CD8-positive, alpha-beta T cell (primary cell): ENCODE measurements at regions of chr11 and their contacts with region 1.

Region 1: GRCh38 chr11:16785520-16786128 is 47.2 kb downstream of the C11orf58 start:
- DNase-seq: peak; percentile 16 to 65 (median 47)
- ATAC-seq: peak; percentile 80
- H3K4me3 ChIP-seq: no peak overlapping the region
- H3K4me3 Mint-ChIP-seq: no peak overlapping the region
- H3K27ac ChIP-seq: no peak overlapping the region
- H3K27ac Mint-ChIP-seq: no peak overlapping the region
- H3K4me1 ChIP-seq: no peaks in the 10 kb centered on the region
- H3K4me1 Mint-ChIP-seq: no peaks in the 10 kb centered on the region
- H3K27me3 ChIP-seq: no peaks in the 10 kb centered on the region
- H3K27me3 Mint-ChIP-seq: no peaks in the 10 kb centered on the region
- CTCF ChIP-seq: peak; percentile 69

Region 2: GRCh38 chr11:16773981-16774935 is 11.4 kb before region 1 on chr11:
- CTCF ChIA-PET with region 1: interaction called, 18 read pairs
- POLR2A ChIA-PET with region 1: no interaction called
- intact Hi-C with region 1: no loop called
- DNase-seq: no peak
- ATAC-seq: no peak
- H3K4me3 ChIP-seq: no peak overlapping the region
- H3K4me3 Mint-ChIP-seq: no peak overlapping the region
- H3K27ac ChIP-seq: no peak overlapping the region
- H3K27ac Mint-ChIP-seq: no peak overlapping the region
- H3K4me1 ChIP-seq: no peaks in the 10 kb centered on the region
- H3K4me1 Mint-ChIP-seq: no peaks in the 10 kb centered on the region
- H3K27me3 ChIP-seq: no peaks in the 10 kb centered on the region
- H3K27me3 Mint-ChIP-seq: peaks cover 2% of the 10 kb centered on the region
- CTCF ChIP-seq: no peak

Region 3: GRCh38 chr11:16801288-16801980 is 15.8 kb after region 1 on chr11:
- CTCF ChIA-PET with region 1: interaction called, 13 read pairs
- POLR2A ChIA-PET with region 1: no interaction called
- intact Hi-C with region 1: no loop called
- DNase-seq: no peak
- ATAC-seq: no peak
- H3K4me3 ChIP-seq: no peak overlapping the region
- H3K4me3 Mint-ChIP-seq: no peak overlapping the region
- H3K27ac ChIP-seq: no peak overlapping the region
- H3K27ac Mint-ChIP-seq: no peak overlapping the region
- H3K4me1 ChIP-seq: no peaks in the 10 kb centered on the region
- H3K4me1 Mint-ChIP-seq: no peaks in the 10 kb centered on the region
- H3K27me3 ChIP-seq: no peaks in the 10 kb centered on the region
- H3K27me3 Mint-ChIP-seq: no peaks in the 10 kb centered on the region
- CTCF ChIP-seq: no peak

Region 4: DNA sequence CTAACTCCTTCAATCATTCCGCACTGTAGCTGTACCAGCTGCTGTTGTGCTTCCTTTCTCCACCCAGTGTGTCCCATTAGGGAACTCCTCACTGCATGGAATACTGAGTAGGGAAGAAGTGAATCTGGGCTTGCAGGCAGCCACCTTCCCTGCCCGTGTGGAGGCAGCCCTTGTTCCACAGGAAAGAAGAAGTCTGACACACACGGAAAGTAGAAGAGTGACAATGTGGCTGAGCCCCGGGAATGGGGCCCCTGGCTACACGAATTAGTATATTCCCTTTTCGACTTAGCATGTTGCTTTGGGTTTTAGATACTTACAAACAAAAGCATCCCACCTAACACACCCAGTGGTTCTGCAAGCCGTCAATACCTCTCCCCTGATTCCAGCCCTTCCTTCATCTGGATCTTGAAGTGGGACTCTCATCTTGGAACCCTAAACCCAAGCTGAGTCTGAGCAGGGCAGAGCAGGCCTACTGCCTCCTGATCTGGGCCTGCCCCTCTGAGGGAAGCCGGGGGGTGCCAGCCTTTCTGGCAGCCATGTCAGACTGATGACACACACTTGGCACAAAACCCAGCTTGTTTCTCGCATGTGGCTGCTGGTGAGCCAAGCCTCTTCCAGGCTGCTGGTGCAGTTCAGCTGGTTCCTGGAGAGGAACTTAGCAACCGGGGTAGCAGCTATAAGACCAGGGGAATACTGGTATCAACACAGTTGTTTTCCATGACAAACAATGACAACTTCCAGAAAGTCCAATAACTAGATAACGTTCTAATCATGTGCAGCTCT is 24.5 kb after region 1 on chr11:
- CTCF ChIA-PET with region 1: interaction called, 25 read pairs
- POLR2A ChIA-PET with region 1: no interaction called
- intact Hi-C with region 1: no loop called
- DNase-seq: no peak
- ATAC-seq: no peak
- H3K4me3 ChIP-seq: no peak overlapping the region
- H3K4me3 Mint-ChIP-seq: no peak overlapping the region
- H3K27ac ChIP-seq: no peak overlapping the region
- H3K27ac Mint-ChIP-seq: no peak overlapping the region
- H3K4me1 ChIP-seq: no peaks in the 10 kb centered on the region
- H3K4me1 Mint-ChIP-seq: peaks cover 2% of the 10 kb centered on the region
- H3K27me3 ChIP-seq: no peaks in the 10 kb centered on the region
- H3K27me3 Mint-ChIP-seq: no peaks in the 10 kb centered on the region
- CTCF ChIP-seq: no peak

Region 5: DNA sequence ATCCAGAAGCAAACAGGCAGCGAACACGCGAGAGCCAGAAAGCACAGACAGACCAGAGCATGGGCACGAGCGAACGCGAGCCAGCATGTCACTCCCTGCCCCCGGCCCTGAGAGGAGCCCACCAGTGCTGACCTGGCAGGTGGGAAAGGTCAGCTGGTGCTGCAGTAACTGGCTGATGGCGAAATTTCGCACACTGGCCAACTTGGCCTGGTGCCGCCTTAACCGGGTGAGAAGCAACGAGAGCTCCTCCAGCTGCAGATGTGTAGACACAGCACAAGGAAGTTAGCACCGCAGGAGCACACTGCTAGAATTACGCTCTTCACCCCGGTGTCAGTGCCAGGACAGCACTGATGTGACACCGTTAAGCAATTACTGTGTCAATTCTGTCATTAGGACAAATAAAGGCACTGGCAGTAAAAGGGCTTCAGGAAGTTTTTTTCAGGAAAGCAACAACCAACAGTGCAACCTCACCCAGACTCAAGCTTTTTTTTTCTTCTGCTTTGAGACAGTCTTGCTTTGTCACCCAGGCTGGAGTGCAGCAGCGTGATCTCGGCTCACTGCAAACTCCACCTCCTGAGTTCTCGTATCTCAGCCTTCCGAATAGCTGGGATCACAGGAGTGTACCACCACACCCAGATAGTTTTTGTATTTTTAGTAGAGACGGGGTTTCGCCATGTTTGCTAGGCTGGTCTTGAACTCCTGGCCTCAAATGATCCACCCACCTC is 29.6 kb after region 1 on chr11:
- CTCF ChIA-PET with region 1: interaction called, 25 read pairs
- POLR2A ChIA-PET with region 1: no interaction called
- intact Hi-C with region 1: no loop called
- DNase-seq: no peak
- ATAC-seq: no peak
- H3K4me3 ChIP-seq: no peak overlapping the region
- H3K4me3 Mint-ChIP-seq: no peak overlapping the region
- H3K27ac ChIP-seq: no peak overlapping the region
- H3K27ac Mint-ChIP-seq: peak overlapping the region; percentile 27
- H3K4me1 ChIP-seq: no peaks in the 10 kb centered on the region
- H3K4me1 Mint-ChIP-seq: no peaks in the 10 kb centered on the region
- H3K27me3 ChIP-seq: no peaks in the 10 kb centered on the region
- H3K27me3 Mint-ChIP-seq: peaks cover 3% of the 10 kb centered on the region
- CTCF ChIP-seq: no peak

Region 6: GRCh38 chr11:17063171-17064002 is 277.8 kb after region 1 on chr11:
- CTCF ChIA-PET with region 1: interaction called, 4 read pairs
- POLR2A ChIA-PET with region 1: no interaction called
- intact Hi-C with region 1: loop called (anchors 1 to 2 kb)
- DNase-seq: peak in 4 of 9 experiments; percentile 27 to 53 (median 40)
- ATAC-seq: peak; percentile 48
- H3K4me3 ChIP-seq: no peak overlapping the region
- H3K4me3 Mint-ChIP-seq: no peak overlapping the region
- H3K27ac ChIP-seq: no peak overlapping the region
- H3K27ac Mint-ChIP-seq: no peak overlapping the region
- H3K4me1 ChIP-seq: no peaks in the 10 kb centered on the region
- H3K4me1 Mint-ChIP-seq: no peaks in the 10 kb centered on the region
- H3K27me3 ChIP-seq: no peaks in the 10 kb centered on the region
- H3K27me3 Mint-ChIP-seq: no peaks in the 10 kb centered on the region
- CTCF ChIP-seq: no peak

Region 7: DNA sequence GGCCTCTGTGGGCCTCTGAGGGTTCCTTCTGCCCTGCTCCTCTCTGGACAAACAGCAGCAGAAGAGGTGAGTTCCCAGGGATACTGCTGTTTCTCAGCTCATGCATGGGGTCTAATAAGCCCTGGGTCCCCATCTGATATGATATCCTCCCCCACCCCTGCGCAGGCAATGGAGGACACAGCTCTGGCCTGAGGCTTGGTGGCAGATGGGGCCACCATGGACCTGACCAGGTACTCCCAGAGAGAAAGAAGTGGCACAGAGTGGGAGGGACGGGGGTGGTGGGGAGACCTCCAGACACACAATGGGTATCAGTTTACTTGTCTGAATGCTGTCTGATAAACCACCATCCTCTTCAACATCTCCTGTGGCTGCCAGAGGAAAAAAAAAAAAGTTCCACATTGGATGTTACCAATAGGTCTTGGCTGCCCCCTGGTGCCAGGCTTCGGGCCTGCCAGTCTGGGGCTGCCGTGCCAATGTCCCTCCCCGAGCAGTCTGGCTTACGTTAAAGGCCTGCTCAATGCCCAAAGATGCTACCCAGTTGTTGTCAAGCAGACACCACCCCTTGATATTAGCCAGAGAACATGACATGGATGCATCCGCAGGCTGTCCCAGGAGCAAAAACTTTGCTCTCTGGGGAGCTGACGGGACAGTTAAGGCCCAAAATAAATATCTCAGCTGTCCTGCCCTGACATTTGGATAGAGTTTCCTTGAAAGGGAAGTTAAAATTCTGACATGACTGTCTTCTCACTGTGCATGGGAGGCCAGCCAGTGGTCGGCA is 718.9 kb after region 1 on chr11:
- CTCF ChIA-PET with region 1: interaction called, 6 read pairs
- POLR2A ChIA-PET with region 1: no interaction called
- intact Hi-C with region 1: loop called (anchors 1 to 10 kb)
- DNase-seq: peak; percentile 59 to 85 (median 75)
- ATAC-seq: peak; percentile 85
- H3K4me3 ChIP-seq: no peak overlapping the region
- H3K4me3 Mint-ChIP-seq: no peak overlapping the region
- H3K27ac ChIP-seq: no peak overlapping the region
- H3K27ac Mint-ChIP-seq: no peak overlapping the region
- H3K4me1 ChIP-seq: no peaks in the 10 kb centered on the region
- H3K4me1 Mint-ChIP-seq: no peaks in the 10 kb centered on the region
- H3K27me3 ChIP-seq: no peaks in the 10 kb centered on the region
- H3K27me3 Mint-ChIP-seq: peaks cover 6% of the 10 kb centered on the region
- CTCF ChIP-seq: peak; percentile 72